ENCODE measurements at regions of chr16 and their contacts with region 1.

Region 1: DNA sequence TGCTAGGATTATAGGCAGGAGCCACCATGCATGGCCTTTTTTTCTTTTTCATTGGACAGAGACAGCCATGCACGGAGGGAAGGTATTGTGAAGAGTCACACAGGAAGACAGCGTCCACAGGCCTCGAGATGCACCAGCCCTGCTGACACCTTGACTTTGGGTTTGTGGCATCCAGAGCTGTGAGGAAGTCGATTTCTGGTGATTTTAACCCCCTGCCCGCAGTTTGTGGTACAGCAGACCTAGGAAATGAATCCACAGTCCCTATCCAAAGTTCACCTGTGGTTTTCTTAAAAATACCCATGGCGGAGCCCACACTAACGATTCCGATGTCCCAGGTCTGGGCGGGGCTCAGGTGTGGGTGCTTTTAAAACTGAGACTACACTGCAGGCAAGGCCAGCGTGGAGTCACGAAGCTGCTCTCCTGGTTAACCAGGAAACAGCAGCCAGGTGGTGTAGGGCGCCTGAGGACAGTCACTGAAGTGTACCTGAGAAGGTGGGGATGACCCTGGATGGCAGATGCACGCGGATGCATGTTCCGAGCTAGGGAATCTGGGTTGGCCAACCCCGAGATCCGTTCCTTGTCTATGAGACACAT is 14.4 kb upstream of the MEAK7 start:
- DNase-seq: peak; percentile 94
- ATAC-seq: peak; percentile 60
- H3K4me3 Mint-ChIP-seq: peak overlapping the region; percentile 59
- H3K27ac Mint-ChIP-seq: peak overlapping the region; percentile 92
- H3K4me1 Mint-ChIP-seq: peaks cover 91% of the 10 kb centered on the region
- H3K27me3 Mint-ChIP-seq: no peaks in the 10 kb centered on the region

Region 2: DNA sequence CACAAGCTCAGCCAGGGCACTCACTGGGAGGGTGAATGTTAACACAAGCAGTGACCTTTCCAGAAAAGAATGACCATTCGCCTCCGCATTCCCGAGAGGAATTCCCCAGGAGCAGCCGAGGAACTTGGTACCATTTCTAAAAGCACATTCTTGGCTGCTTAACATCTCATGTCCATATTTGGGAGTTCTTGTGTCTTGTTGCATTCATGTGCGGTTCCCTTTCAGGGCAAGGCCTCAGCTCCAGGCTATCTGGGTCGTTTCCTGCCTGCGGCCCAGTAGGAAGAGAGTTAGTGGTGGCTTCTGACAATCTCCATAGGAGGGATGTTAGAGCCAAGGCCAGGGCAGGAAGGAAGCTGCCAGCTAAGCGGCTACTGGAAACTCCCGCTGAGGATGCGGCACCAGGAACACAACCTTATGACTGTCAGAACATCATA is 13.5 kb after region 1 on chr16:
- CTCF ChIA-PET with region 1: interaction called, 17 read pairs
- POLR2A ChIA-PET with region 1: interaction called, 11 read pairs
- DNase-seq: no peak
- ATAC-seq: no peak
- H3K4me3 Mint-ChIP-seq: no peak overlapping the region
- H3K27ac Mint-ChIP-seq: no peak overlapping the region
- H3K4me1 Mint-ChIP-seq: peaks cover 42% of the 10 kb centered on the region
- H3K27me3 Mint-ChIP-seq: no peaks in the 10 kb centered on the region

Region 3: GRCh38 chr16:84548971-84549844 is 30.4 kb after region 1 on chr16:
- CTCF ChIA-PET with region 1: interaction called, 172 read pairs
- POLR2A ChIA-PET with region 1: interaction called, 31 read pairs
- DNase-seq: peak; percentile 75
- ATAC-seq: peak; percentile 54
- H3K4me3 Mint-ChIP-seq: peak overlapping the region; percentile 86
- H3K27ac Mint-ChIP-seq: peak overlapping the region; percentile 98
- H3K4me1 Mint-ChIP-seq: peaks cover 52% of the 10 kb centered on the region
- H3K27me3 Mint-ChIP-seq: no peaks in the 10 kb centered on the region

Region 4: GRCh38 chr16:84555418-84556195 is 36.8 kb after region 1 on chr16:
- CTCF ChIA-PET with region 1: interaction called, 172 read pairs
- POLR2A ChIA-PET with region 1: interaction called, 31 read pairs
- DNase-seq: no peak
- ATAC-seq: no peak
- H3K4me3 Mint-ChIP-seq: no peak overlapping the region
- H3K27ac Mint-ChIP-seq: peak overlapping the region; percentile 53
- H3K4me1 Mint-ChIP-seq: peaks cover 35% of the 10 kb centered on the region
- H3K27me3 Mint-ChIP-seq: no peaks in the 10 kb centered on the region